Left colon (tissue), 2 donors: ENCODE measurements at regions of chr22 and their contacts with region 1.

Region 1: GRCh38 chr22:47484960-47485569 is 722.6 kb downstream of the TBC1D22A start:
- DNase-seq: no peak
- ATAC-seq: no peak

Region 2: DNA sequence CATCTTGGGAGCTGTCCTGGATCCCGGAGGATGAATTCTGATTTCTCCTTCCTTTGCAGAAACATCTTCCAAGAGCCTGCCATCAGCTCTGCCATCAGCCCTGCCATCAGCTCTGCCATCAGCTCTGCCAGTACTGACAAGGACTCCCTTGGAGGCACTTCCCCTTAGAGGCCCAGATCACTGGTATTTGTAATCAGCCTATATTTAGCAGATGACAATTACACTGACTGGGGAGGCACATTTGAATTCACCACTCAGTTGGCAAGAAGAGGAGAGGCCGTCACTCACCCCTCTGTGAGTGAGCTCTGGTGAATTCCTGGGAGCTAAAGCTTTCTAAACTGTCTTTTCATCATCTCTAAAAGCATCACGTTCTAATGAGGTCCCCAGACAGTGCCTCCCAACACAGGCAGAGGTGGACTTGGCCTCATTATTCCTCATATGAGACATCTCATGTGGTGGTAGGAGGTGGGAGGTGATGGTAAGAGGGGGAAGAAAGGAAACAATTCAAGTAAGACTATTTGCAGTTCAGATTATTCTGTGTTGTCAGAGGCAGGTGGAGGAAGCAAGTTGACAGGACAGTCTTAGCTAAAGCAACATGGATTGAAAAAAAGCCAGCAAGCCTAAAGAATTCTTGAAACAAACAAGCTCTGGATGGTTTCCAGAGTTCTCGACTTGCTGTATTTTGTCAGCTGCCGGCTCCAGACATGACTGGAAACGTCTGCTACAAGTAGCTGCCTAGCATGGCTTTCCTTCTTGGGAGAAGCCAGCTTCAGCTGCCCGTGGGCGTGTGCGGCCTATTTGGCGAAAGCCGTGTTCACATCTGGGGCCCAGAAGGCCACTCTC is 49.1 kb after region 1 on chr22:
- intact Hi-C with region 1: loop called in 1 of 2 experiments (anchors 10 kb)
- DNase-seq: no peak
- ATAC-seq: no peak

Region 3: DNA sequence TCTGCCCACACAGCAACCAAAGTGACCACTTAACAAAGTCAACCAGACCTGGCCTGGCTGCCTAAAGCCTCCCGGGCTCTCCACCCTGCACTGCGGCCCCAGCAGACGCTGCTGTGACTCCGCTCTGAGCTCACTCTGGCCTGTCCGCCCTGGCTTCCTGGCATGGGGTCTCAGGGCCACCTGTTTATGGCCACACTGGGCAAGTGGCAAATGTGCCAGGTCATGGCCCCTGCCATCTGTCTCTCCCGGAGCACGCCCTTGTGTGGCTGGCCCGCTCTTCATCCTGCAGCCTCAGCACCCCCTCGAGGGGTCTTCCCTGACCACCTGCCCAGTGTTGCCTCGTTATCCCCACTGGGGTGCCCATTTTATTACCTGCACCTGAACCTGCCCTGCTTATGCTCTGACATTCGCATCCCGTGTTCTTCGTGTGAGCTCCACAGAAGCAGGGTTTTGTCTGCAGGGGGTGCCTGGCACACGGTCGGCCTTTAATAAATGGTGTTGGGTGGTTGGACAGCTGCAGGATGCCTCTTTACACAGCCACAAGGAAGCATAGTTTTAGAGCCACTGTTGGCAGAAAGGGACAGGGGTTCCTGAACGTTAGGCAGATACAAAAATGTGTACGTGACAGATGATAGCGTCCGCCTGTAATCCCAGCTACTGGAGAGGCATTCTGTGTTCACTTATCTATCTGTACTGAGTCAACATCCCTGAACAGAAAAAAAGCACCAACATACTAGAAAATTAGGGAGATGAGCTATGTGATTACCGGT is 63.0 kb after region 1 on chr22:
- intact Hi-C with region 1: no loop called
- DNase-seq: no peak
- ATAC-seq: no peak